Calu3 (cell line): ENCODE measurements at regions of chr14 and their contacts with region 1.

Region 1: GRCh38 chr14:100056964-100057795 is 8.0 kb upstream of the EVL start:
- DNase-seq: no peak
- H3K4me3 Mint-ChIP-seq: no peak overlapping the region
- H3K27ac Mint-ChIP-seq: no peak overlapping the region
- H3K4me1 Mint-ChIP-seq: peaks cover 11% of the 10 kb centered on the region
- H3K27me3 Mint-ChIP-seq: no peaks in the 10 kb centered on the region
- CTCF ChIP-seq: no peak

Region 2: GRCh38 chr14:99749142-99749541 is 308.0 kb before region 1 on chr14:
- CTCF ChIA-PET with region 1: no interaction called
- intact Hi-C with region 1: no loop called
- DNase-seq: no peak
- H3K4me3 Mint-ChIP-seq: no peak overlapping the region
- H3K27ac Mint-ChIP-seq: no peak overlapping the region
- H3K4me1 Mint-ChIP-seq: peaks cover 50% of the 10 kb centered on the region
- H3K27me3 Mint-ChIP-seq: no peaks in the 10 kb centered on the region
- CTCF ChIP-seq: no peak

Region 3: DNA sequence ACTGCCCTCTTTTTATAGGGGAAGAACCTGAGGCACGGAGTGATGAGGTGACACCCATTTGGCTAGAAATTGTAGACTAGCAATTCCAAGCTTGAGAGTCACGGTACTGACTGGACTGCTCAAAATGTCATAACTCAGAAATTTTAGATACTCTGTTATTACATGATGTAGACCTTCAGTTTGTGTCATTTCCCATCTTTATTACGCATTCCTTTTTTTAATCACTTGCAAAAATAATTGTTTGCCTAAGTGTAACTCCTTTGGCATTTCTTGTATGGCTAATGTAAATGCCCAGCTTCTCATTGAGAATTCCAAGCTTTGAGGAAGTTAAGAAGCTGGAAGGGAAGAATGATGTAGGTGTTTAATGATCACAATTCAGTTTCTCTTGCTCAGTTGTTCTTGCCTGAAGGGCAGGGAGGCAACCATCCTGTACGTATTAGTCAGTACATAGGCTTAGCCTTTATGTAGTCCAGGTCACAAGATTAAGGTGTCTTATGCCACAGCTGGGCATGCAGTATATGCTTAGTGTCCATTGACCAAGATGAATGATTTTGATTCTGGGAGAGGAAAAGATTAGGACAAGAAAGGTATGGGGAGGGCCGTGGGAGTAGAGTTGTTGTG is 60.1 kb before region 1 on chr14:
- CTCF ChIA-PET with region 1: interaction called, 13 read pairs
- intact Hi-C with region 1: no loop called
- DNase-seq: no peak
- H3K4me3 Mint-ChIP-seq: no peak overlapping the region
- H3K27ac Mint-ChIP-seq: no peak overlapping the region
- H3K4me1 Mint-ChIP-seq: no peaks in the 10 kb centered on the region
- H3K27me3 Mint-ChIP-seq: no peaks in the 10 kb centered on the region
- CTCF ChIP-seq: no peak